PC-9 (cell line): ENCODE measurements at regions of chr5 and their contacts with region 1.

Region 1: GRCh38 chr5:159581502-159582249 is 251.4 kb upstream of the IL12B start:
- DNase-seq: peak; percentile 92 to 99
- H3K4me3 ChIP-seq: no peak overlapping the region
- H3K27ac ChIP-seq: peak overlapping the region; percentile 98
- H3K4me1 ChIP-seq: peaks cover 50% of the 10 kb centered on the region
- H3K27me3 ChIP-seq: no peaks in the 10 kb centered on the region
- CTCF ChIP-seq: peak; percentile 36

Region 2: DNA sequence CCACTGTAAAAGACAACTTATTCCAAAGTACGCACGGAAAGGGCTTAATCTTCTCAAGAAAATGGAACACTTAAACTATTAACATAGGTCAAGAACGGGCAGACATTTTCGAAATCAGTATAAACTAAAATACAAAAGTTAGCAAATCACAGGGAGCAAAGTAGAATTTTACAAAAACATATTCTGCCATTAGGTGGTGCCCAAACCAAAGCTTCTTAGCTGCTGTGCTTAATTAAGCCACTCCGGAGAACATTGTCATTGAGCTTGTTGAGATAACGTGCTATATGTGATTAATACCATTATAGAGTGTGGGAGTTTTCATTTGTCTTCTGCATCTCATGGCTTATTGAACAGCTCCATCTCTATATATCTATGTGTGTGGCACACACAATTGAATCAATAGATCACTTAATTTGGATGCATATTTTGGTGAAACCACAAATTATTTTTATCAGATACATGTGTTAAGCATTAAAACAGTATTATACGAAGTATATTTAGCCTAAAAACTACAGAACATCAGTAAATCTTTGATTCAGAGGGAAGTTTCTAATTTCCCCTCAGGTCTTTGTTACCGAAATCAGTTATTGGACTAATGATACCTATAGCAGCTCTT is 295.1 kb before region 1 on chr5:
- CTCF ChIA-PET with region 1: no interaction called
- POLR2A ChIA-PET with region 1: no interaction called
- intact Hi-C with region 1: loop called (anchors 1 kb)
- DNase-seq: no peak
- H3K4me3 ChIP-seq: no peak overlapping the region
- H3K27ac ChIP-seq: no peak overlapping the region
- H3K4me1 ChIP-seq: 0 out of 2 replicates have a peak, but pooled peaks cover 5% of the 10 kb centered on the region
- H3K27me3 ChIP-seq: no peaks in the 10 kb centered on the region
- CTCF ChIP-seq: peak; percentile 68

Region 3: DNA sequence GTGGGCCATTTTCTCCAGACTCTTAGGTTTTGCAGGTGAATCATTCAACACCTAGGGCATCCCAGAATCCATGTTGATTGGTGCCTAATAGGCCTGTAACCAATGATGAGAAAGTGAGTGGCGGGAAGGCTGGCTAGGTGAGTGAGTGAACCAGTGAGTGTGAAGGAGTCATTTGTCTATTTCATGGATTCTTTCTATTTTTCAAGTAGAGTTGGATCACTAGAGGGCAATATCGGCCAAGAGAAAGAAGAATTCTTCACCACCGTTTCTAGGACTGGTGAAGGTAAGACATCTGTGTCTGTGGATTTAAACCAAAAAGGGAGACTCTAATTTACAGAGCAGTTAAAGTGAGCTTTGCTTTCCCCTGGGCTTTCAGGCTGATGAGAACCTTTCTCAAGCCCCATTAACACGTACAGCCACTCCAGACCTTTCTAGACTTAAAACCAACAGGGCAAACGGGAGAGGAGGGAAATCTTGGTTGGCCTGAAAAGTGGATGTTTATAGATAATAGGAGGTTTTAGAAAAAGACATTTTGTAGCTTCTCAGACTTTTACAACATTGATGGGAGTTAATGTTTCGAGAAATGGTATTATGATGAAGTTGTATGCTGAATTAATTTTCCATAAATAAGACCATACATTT is 137.1 kb before region 1 on chr5:
- CTCF ChIA-PET with region 1: no interaction called
- POLR2A ChIA-PET with region 1: no interaction called
- intact Hi-C with region 1: loop called (anchors 1 kb)
- DNase-seq: peak; percentile 38 to 65
- H3K4me3 ChIP-seq: no peak overlapping the region
- H3K27ac ChIP-seq: no peak overlapping the region
- H3K4me1 ChIP-seq: peaks cover 9% of the 10 kb centered on the region
- H3K27me3 ChIP-seq: no peaks in the 10 kb centered on the region
- CTCF ChIP-seq: peak; percentile 74

Region 4: DNA sequence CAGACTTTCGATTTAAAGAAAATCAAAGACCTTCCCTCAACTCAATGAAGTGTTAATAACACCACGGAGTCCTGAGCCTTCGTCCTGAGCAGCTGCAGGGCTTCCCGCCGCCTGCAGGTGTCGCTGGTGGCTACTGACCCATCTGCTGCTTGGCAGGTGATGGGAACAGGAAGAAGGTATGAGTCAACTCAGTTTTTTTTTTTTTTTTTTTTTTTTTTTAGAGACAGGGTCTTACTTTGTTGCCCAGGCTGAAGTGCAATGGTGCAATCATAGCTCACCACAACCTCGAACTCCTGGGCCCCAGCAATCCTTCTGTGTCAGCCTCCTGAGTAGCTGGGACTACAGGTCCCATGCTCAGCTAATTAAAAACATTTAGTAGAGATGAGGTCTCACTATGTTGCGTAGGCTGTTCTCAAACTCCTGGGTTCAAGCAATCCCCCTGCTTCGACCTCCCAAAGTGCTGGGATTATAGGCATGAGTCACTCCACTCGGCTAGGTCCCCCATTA is 65.7 kb before region 1 on chr5:
- CTCF ChIA-PET with region 1: interaction called, 11 read pairs
- POLR2A ChIA-PET with region 1: no interaction called
- intact Hi-C with region 1: loop called (anchors 1 kb)
- DNase-seq: peak; percentile 58 to 76
- H3K4me3 ChIP-seq: no peak overlapping the region
- H3K27ac ChIP-seq: no peak overlapping the region
- H3K4me1 ChIP-seq: peaks cover 45% of the 10 kb centered on the region
- H3K27me3 ChIP-seq: no peaks in the 10 kb centered on the region
- CTCF ChIP-seq: peak; percentile 72

Region 5: GRCh38 chr5:159620853-159621540 is 39.3 kb after region 1 on chr5:
- CTCF ChIA-PET with region 1: no interaction called
- POLR2A ChIA-PET with region 1: no interaction called
- intact Hi-C with region 1: loop called (anchors 2 kb)
- DNase-seq: peak; percentile 54 to 68
- H3K4me3 ChIP-seq: no peak overlapping the region
- H3K27ac ChIP-seq: peak overlapping the region; percentile 39
- H3K4me1 ChIP-seq: peaks cover 26% of the 10 kb centered on the region
- H3K27me3 ChIP-seq: no peaks in the 10 kb centered on the region
- CTCF ChIP-seq: no peak

Region 6: DNA sequence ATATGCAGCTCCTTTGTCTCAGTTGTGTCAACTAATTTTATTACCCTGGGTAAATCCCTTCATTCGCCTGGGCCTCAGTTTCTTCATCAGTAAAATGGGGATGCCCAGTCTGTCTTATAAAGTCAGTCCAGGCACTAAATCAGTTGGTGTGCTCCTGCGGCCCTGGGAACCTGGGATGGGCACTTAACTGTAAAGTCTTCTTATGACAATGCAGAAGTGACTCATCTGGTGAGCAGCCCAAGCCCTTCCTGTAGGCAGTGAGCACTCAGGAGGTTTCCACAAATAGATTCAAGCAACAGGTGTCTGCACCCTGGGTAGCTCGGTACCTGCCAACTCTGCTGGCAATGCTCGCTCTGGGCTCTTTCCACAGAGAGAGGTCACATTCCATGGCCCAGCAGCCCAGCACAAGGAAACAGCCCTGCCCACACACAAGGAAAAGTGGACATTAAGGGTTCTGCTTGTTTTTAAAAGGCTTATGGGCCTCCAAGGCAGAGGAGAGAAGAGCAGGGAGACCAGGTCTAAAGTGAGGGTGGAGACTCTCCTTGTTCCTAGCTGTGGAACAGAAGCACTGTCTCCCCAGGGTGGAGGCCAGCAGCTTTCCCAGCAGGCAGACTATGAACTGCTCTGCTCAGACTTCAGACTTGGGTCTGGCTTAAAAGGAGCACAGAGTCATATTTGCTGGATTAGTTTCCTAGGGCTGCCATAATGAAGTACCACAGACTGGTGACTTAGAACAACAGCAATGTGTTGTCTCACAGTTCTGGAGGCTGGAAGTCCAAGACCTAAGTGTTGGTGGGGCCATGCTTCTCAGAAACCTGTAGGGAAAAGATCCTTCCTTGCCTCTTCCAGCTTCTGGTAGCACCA is 244.9 kb after region 1 on chr5:
- CTCF ChIA-PET with region 1: no interaction called
- POLR2A ChIA-PET with region 1: no interaction called
- intact Hi-C with region 1: loop called (anchors 1 kb)
- DNase-seq: peak; percentile 84 to 99
- H3K4me3 ChIP-seq: no peak overlapping the region
- H3K27ac ChIP-seq: peak overlapping the region; percentile 99
- H3K4me1 ChIP-seq: peaks cover 64% of the 10 kb centered on the region
- H3K27me3 ChIP-seq: no peaks in the 10 kb centered on the region
- CTCF ChIP-seq: no peak

Region 7: GRCh38 chr5:159987031-159987674 is 405.5 kb after region 1 on chr5:
- CTCF ChIA-PET with region 1: interaction called, 17 read pairs
- POLR2A ChIA-PET with region 1: no interaction called
- intact Hi-C with region 1: loop called (anchors 1 kb)
- DNase-seq: peak; percentile 85 to 94
- H3K4me3 ChIP-seq: peak overlapping the region; percentile 65; the same call in 1 of the 2 replicates
- H3K27ac ChIP-seq: peak overlapping the region; percentile 55
- H3K4me1 ChIP-seq: peaks cover 13% of the 10 kb centered on the region
- H3K27me3 ChIP-seq: no peaks in the 10 kb centered on the region
- CTCF ChIP-seq: peak; percentile 90